Stomach (tissue), 19 donors: ENCODE measurements at regions of chr3 and their contacts with region 1.

Region 1: DNA sequence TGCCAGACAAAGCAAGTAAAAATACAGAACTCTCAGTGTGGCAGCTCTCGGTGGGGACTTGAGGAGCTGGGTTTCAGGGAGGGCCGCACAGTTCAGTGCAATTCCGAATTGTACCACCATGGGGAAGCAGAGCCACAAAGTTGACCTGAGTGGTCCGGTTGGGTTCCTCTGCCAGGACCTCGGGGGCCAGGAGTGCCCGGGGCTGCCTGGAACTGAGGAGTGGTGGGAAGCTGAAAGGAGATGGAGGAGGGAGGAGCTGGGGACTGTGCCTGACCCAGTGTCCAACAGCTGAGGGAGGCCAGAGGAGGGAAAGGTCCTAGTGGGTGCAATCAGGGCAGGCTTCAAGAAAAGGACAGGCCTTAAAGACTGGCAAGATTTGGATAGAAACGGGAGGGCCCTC is 32.2 kb upstream of the TRH start:
- DNase-seq: peak; percentile 54 to 86
- H3K4me3 ChIP-seq: no peak overlapping the region
- H3K27ac ChIP-seq: no peak overlapping the region
- H3K4me1 ChIP-seq: peaks cover 0 to 2% (median under 1%) of the 10 kb centered on the region in 4 donors
- H3K27me3 ChIP-seq: no peaks in the 10 kb centered on the region
- CTCF ChIP-seq: peak in 5 of 7 experiments; percentile 61 to 77 (median 67)
- EP300 ChIP-seq: no peak
- POLR2A ChIP-seq: no peak

Region 2: GRCh38 chr3:129633751-129634392 is 308.4 kb before region 1 on chr3:
- intact Hi-C with region 1: loop called (anchors 10 kb)
- DNase-seq: no peak
- H3K4me3 ChIP-seq: no peak overlapping the region
- H3K27ac ChIP-seq: no peak overlapping the region
- H3K4me1 ChIP-seq: peaks cover 0 to 1% (median 0%) of the 10 kb centered on the region in 4 donors
- H3K27me3 ChIP-seq: no peaks in the 10 kb centered on the region
- CTCF ChIP-seq: no peak
- EP300 ChIP-seq: no peak
- POLR2A ChIP-seq: no peak

Region 3: GRCh38 chr3:129783470-129783869 is 158.8 kb before region 1 on chr3:
- intact Hi-C with region 1: no loop called
- DNase-seq: no peak
- H3K4me3 ChIP-seq: no peak overlapping the region
- H3K27ac ChIP-seq: no peak overlapping the region
- H3K4me1 ChIP-seq: peaks cover 0 to 2% (median 0%) of the 10 kb centered on the region in 4 donors
- H3K27me3 ChIP-seq: no peaks in the 10 kb centered on the region
- CTCF ChIP-seq: no peak
- EP300 ChIP-seq: no peak
- POLR2A ChIP-seq: no peak

Region 4: GRCh38 chr3:130111185-130111864 is 169.0 kb after region 1 on chr3:
- intact Hi-C with region 1: loop called (anchors 10 kb)
- DNase-seq: peak; percentile 99
- H3K4me3 ChIP-seq: peak overlapping the region; percentile 79 to 94 (median 82)
- H3K27ac ChIP-seq: peak overlapping the region; percentile 84 to 92 (median 85)
- H3K4me1 ChIP-seq: peaks cover 6 to 19% (median 12%) of the 10 kb centered on the region in 4 donors
- H3K27me3 ChIP-seq: no peaks in the 10 kb centered on the region
- CTCF ChIP-seq: no peak
- EP300 ChIP-seq: no peak
- POLR2A ChIP-seq: no peak